BJ (cell line): ENCODE measurements at regions of chr9 and their contacts with region 1.

Region 1: GRCh38 chr9:129641746-129642513 is at the start of gene ASB6:
- DNase-seq: peak; percentile 69
- H3K4me3 ChIP-seq: peak within 1 kb of the TSS; percentile 98
- H3K27me3 ChIP-seq: no peaks in the 10 kb centered on the region
- CTCF ChIP-seq: peak; percentile 83
- polyA plus RNA-seq, gene ASB6: 13.1 and 23.2 TPM in 2 replicates

Region 2: GRCh38 chr9:129131300-129132145 is 510.4 kb before region 1 on chr9:
- CTCF ChIA-PET with region 1: interaction called, 14 read pairs
- POLR2A ChIA-PET with region 1: no interaction called
- DNase-seq: no peak
- H3K4me3 ChIP-seq: no peak overlapping the region
- H3K27me3 ChIP-seq: no peaks in the 10 kb centered on the region
- CTCF ChIP-seq: peak; percentile 99

Region 3: GRCh38 chr9:129352146-129352865 is 289.6 kb before region 1 on chr9:
- CTCF ChIA-PET with region 1: no interaction called
- POLR2A ChIA-PET with region 1: no interaction called
- DNase-seq: no peak
- H3K4me3 ChIP-seq: peak overlapping the region; percentile 51
- H3K27me3 ChIP-seq: no peaks in the 10 kb centered on the region
- CTCF ChIP-seq: no peak

Region 4: DNA sequence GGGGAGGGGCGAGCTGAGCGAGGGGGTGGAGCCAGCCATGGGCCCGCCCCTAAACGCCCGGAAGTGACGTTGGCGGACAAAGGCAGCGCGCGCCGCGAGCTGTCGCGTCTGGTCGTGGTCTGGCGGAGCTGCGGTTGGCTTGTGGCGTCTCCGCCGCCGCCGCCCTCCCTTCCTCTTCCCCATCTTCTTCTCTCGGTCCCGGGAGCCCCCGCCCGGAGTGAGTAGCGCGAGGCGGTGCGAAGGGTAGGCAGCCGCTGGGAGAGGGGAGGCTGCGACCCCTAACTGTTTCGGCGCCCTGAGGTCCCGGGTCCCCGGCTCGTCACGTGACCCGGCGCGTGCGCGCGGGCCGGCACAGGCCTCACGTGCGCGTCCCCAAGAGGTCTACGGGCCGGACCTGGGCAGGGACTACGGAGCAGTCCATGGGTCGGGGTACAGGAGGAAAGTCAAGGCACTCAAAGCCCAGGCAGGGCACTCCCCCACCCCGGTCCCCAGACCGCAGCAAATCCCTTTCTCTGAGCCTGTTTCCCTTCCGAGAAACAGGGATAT is 15.8 kb before region 1 on chr9 and contains the start of gene NTMT1:
- CTCF ChIA-PET with region 1: interaction called, 20 read pairs
- POLR2A ChIA-PET with region 1: interaction called, 7 read pairs
- DNase-seq: no peak
- H3K4me3 ChIP-seq: peak within 1 kb of the TSS; percentile 88
- H3K27me3 ChIP-seq: no peaks in the 10 kb centered on the region
- CTCF ChIP-seq: no peak
- polyA plus RNA-seq, gene NTMT1: 77.1 and 96.3 TPM in 2 replicates

Region 5: GRCh38 chr9:129696938-129697650 is 55.2 kb after region 1 on chr9:
- CTCF ChIA-PET with region 1: interaction called, 12 read pairs
- POLR2A ChIA-PET with region 1: no interaction called
- DNase-seq: no peak
- H3K4me3 ChIP-seq: peak overlapping the region; percentile 38
- H3K27me3 ChIP-seq: no peaks in the 10 kb centered on the region
- CTCF ChIP-seq: no peak

Region 6: DNA sequence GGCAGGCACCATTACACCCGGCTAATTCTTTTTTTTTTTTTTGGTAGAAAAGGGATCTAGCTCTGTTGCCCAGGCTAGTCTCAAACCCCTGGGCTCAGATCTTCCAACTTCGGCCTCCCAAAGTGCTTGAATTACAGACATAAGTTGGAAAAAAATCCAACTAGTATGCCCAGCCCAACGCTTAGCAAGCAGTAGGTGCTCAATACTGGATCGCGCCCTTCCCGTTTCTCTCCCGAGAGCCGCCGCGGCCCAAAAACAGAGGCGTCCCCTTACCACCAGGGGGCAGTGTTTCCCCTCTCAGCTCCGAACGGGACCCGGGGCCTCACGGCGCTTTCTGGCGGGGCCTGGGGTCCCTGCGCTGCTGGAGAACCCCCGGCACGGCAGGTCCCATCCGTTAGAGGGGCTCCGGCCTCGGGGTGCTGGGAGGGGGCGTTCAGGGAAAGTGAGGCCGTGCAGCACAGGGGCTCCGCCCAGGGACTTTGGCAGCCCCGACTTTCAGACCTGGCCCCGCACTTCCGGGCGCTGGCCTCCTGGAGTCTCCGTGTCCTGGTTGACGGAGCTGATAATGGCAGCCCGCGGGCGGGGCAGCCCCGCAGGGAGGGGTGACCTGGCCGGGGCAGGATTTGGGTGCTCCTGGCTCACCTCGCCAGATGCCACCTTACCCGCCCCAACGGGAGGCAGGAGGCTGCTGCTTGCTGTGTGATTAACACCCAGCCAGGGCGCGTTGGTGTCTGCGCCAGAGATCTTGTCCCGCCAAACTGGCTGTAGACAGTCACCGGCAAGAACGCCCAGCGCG is 95.7 kb after region 1 on chr9:
- CTCF ChIA-PET with region 1: interaction called, 59 read pairs
- POLR2A ChIA-PET with region 1: no interaction called
- DNase-seq: no peak
- H3K4me3 ChIP-seq: peak overlapping the region; percentile 37
- H3K27me3 ChIP-seq: no peaks in the 10 kb centered on the region
- CTCF ChIP-seq: peak; percentile 95

Region 7: DNA sequence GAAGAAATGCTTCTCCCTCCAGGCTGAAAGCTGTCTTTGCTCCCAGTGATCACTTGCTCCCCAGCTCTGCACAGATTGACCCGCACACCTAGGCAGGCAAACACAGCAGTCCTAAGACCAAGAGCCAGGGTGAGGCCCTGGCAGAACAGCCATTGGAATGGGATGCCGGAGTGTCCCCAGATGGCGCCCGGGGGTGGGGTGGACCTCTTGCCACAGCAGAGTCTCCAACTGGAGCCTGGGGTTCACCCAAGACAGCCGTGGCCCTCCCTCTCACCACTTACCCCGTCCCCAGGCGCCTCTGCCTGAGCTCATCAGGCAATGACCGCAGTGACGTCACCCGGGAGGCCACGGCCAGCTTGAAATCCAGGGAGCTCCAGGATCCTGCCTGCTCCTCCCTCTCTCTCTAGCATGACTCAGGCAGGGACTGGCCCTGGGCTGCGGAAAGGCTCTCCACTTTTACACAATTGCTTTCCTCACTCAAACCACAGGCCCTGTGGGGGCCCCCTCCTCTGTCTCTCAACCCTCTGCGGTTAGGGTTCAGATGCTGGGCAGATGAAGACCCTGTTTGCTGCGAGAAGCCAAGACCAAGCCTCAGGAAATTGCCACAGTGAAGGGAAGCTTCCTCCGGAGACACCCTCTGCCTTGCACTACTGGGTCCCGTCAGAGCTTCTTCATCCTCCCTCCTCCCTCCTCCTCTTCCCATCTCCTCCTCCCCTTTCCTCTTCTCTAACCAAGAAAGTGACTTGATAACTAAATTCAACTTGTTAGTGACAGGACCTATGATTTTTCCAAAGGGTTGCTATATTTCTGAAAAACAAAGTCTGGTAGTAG is 135.2 kb after region 1 on chr9:
- CTCF ChIA-PET with region 1: interaction called, 71 read pairs
- POLR2A ChIA-PET with region 1: no interaction called
- DNase-seq: peak; percentile 97
- H3K4me3 ChIP-seq: peak overlapping the region; percentile 20
- H3K27me3 ChIP-seq: no peaks in the 10 kb centered on the region
- CTCF ChIP-seq: no peak

Region 8: GRCh38 chr9:129783516-129784361 is 141.8 kb after region 1 on chr9:
- CTCF ChIA-PET with region 1: interaction called, 71 read pairs
- POLR2A ChIA-PET with region 1: no interaction called
- DNase-seq: no peak
- H3K4me3 ChIP-seq: no peak overlapping the region
- H3K27me3 ChIP-seq: no peaks in the 10 kb centered on the region
- CTCF ChIP-seq: peak; percentile 92